Activated CD4-positive, alpha-beta T cell treated with anti-CD3 and anti-CD28 coated beads, Interleukin-2, amount 10 ng/mL, durations not matched to agents 24 days and 14 days (primary cell): ENCODE measurements at regions of chr11 and their contacts with region 1.

Region 1: GRCh38 chr11:59802639-59803176 is 7.9 kb downstream of the MRPL16 start:
- DNase-seq: peak; percentile 89
- H3K4me3 Mint-ChIP-seq: no peak overlapping the region
- H3K27ac Mint-ChIP-seq: no peak overlapping the region
- H3K4me1 Mint-ChIP-seq: peaks cover 13% of the 10 kb centered on the region
- H3K27me3 Mint-ChIP-seq: no peaks in the 10 kb centered on the region

Region 2: DNA sequence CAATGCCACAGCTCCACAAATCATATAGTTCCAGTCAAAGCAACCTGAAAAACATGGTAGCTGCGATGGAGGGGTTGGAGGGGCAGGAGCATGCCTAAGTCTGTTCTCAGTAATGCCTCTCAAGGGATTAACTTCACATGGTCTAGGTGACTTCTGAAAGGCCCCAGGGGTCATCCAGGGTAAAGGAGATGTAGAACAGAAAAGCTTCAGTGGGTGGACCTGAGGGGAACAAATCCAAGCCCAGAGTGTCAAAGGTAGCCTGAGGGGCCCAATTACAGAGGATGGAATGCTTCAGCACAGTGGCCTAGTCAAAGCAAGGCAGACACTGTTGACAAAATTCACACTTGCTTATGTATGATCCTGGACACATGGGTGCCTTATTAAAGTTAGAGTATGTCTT is 268.0 kb before region 1 on chr11:
- intact Hi-C with region 1: loop called (anchors 5 kb)
- DNase-seq: no peak
- H3K4me3 Mint-ChIP-seq: no peak overlapping the region
- H3K27ac Mint-ChIP-seq: no peak overlapping the region
- H3K4me1 Mint-ChIP-seq: peaks cover 18% of the 10 kb centered on the region
- H3K27me3 Mint-ChIP-seq: peaks cover 3% of the 10 kb centered on the region

Region 3: DNA sequence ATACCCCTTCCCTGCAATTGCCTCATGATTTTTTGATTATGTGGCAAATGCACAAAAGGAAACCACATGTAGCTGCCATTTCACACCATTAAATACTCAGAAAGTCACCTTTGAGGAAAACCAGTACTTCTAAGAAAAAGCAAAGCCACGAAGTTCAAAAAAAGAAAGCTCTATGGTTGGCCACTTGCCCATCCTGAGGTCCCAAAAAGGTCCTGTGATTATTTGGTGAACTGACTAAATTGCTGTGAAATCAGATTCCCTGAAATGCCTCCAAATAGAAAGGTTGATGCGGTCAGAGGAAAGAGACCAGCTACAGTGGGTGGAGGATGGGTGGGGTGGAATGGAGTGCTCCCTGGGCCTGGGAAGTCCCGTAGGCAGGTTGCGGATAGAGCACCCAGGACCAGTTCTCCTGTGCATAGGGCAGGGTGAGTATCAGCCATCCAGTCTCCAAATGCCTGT is 19.0 kb before region 1 on chr11:
- intact Hi-C with region 1: loop called (anchors 2 kb)
- DNase-seq: peak; percentile 70
- H3K4me3 Mint-ChIP-seq: peak overlapping the region; percentile 36
- H3K27ac Mint-ChIP-seq: peak overlapping the region; percentile 62
- H3K4me1 Mint-ChIP-seq: peaks cover 46% of the 10 kb centered on the region
- H3K27me3 Mint-ChIP-seq: no peaks in the 10 kb centered on the region